ENCODE measurements at regions of chr20 and their contacts with region 1.

Region 1: GRCh38 chr20:11274141-11274594 is 600.4 kb upstream of the JAG1 start:
- DNase-seq: peak in 4 of 5 donors; percentile 55 to 90 (median 74)
- H3K4me3 ChIP-seq: no peak overlapping the region
- H3K27ac ChIP-seq: no peak overlapping the region
- H3K4me1 ChIP-seq: no peaks in the 10 kb centered on the region
- H3K27me3 ChIP-seq: no peaks in the 10 kb centered on the region
- CTCF ChIP-seq: peak; percentile 60

Region 2: DNA sequence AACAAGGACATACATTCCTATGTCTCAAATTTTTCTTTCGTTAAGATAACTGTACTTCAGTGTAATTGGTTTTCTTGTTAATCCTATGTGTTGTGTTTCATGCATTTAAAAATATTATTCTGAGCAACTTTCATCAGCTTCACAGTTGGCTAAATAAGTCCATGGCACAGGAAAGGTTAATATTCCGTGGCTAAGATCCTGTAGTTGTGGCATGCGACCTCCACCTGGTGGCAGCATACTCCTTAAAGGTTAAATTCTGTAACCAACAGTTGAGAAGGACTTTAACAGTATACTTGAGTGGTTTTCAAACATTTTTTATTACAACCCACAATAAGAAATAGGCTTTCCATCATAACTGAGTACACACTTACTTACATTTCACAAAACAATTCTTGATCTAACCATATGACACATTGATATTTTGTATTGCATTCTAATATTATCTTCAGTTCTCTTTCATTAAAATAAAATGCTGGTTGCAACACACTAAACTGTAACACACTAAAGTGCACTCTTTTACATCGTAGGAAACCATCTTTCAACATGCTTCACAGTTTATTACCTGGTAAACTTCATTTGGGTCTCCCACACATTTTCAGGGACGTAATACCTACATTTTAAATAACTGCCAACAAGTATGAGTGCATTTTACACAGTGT is 720.7 kb before region 1 on chr20:
- intact Hi-C with region 1: loop called (anchors 10 kb)
- DNase-seq: peak; percentile 66 to 88 (median 78)
- H3K4me3 ChIP-seq: no peak overlapping the region
- H3K27ac ChIP-seq: no peak overlapping the region
- H3K4me1 ChIP-seq: no peaks in the 10 kb centered on the region
- H3K27me3 ChIP-seq: no peaks in the 10 kb centered on the region
- CTCF ChIP-seq: peak; percentile 82